Heart left ventricle (tissue), 16 donors: ENCODE measurements at regions of chr17 and their contacts with region 1.

Region 1: GRCh38 chr17:56099649-56100048 is 53.6 kb upstream of the ANKFN1 start:
- DNase-seq: no peak
- ATAC-seq: no peak
- H3K4me3 ChIP-seq: no peak overlapping the region
- H3K27ac ChIP-seq: no peak overlapping the region
- H3K4me1 ChIP-seq: no peaks in the 10 kb centered on the region
- H3K27me3 ChIP-seq: peaks cover 0 to 9% (median 0%) of the 10 kb centered on the region in 9 donors
- CTCF ChIP-seq: no peak
- POLR2A ChIP-seq: no peak

Region 2: GRCh38 chr17:56083476-56083875 is 16.2 kb before region 1 on chr17:
- intact Hi-C with region 1: loop called in 1 of 10 experiments (anchors 2 kb)
- DNase-seq: no peak
- ATAC-seq: no peak
- H3K4me3 ChIP-seq: no peak overlapping the region
- H3K27ac ChIP-seq: no peak overlapping the region
- H3K4me1 ChIP-seq: no peaks in the 10 kb centered on the region
- H3K27me3 ChIP-seq: peaks cover 0 to 5% (median 0%) of the 10 kb centered on the region in 9 donors
- CTCF ChIP-seq: no peak
- POLR2A ChIP-seq: no peak

Region 3: GRCh38 chr17:56121440-56122028 is 21.9 kb after region 1 on chr17:
- intact Hi-C with region 1: no loop called
- DNase-seq: no peak
- ATAC-seq: no peak
- H3K4me3 ChIP-seq: no peak overlapping the region
- H3K27ac ChIP-seq: no peak overlapping the region
- H3K4me1 ChIP-seq: no peaks in the 10 kb centered on the region
- H3K27me3 ChIP-seq: peaks cover 0 to 3% (median 0%) of the 10 kb centered on the region in 9 donors
- CTCF ChIP-seq: no peak
- POLR2A ChIP-seq: no peak

Region 4: DNA sequence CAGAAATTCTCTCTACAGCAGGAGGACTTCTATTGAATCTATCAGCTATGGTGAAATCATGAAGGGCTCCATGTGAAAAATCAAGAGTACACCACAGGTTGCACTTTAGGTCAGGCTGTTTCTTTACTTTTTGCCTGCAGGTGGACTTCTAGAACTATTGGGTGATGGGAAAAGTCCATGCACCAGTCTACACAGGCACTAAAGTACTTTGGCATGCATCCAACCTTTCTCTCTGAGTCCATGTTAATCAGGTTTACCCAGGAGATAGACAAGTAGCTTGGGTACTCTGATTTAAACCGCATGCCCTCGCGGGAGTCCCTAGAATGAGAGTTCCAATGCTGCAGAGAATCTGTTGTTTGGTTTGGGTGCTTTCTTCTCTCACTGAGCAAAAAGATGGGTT is 44.6 kb after region 1 on chr17:
- intact Hi-C with region 1: no loop called
- DNase-seq: no peak
- ATAC-seq: no peak
- H3K4me3 ChIP-seq: no peak overlapping the region
- H3K27ac ChIP-seq: no peak overlapping the region
- H3K4me1 ChIP-seq: no peaks in the 10 kb centered on the region
- H3K27me3 ChIP-seq: peaks cover 0 to 4% (median 0%) of the 10 kb centered on the region in 9 donors
- CTCF ChIP-seq: no peak
- POLR2A ChIP-seq: no peak